K562 (cell line): ENCODE measurements at regions of chr2 and their contacts with region 1.

Region 1: DNA sequence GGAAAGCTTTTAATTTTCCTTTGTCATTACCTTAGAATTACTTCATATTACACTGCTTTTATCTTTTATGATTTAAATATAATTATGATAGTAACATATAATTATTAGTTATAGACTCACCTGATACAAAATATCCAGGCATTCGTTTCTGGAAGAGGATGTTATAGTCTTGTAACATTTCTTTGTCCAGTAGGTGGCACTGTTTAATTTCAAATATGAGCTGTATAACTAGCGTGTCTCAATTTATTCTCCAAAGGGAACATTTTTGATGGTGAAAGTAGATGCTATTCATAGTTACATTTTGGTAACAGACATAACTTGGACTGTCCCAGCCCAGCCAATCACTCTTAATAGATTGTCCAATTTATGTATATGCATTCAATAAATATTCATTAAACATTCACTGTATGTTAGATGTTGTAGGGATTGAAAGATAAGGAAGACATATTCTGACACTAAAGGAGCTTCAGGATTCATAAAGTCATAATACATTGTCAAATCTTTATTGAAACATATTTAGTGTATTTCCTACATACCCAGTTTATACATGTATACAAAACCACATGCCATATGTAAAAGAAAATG is 19.2 kb downstream of the DAW1 start:
- DNase-seq: peak; percentile 17 to 45 (median 19)
- ATAC-seq: peak; percentile 79
- H3K4me3 ChIP-seq: no peak overlapping the region
- H3K27ac ChIP-seq: no peak overlapping the region
- H3K4me1 ChIP-seq: no peaks in the 10 kb centered on the region
- H3K27me3 ChIP-seq: no peaks in the 10 kb centered on the region
- CTCF ChIP-seq: peak in 2 of 3 experiments; percentile 16 to 56; a peak in 3 of 6 replicates
- EP300 ChIP-seq: no peak
- POLR2A ChIP-seq: no peak
- RAD21 ChIP-seq: peak; percentile 37 to 56

Region 2: DNA sequence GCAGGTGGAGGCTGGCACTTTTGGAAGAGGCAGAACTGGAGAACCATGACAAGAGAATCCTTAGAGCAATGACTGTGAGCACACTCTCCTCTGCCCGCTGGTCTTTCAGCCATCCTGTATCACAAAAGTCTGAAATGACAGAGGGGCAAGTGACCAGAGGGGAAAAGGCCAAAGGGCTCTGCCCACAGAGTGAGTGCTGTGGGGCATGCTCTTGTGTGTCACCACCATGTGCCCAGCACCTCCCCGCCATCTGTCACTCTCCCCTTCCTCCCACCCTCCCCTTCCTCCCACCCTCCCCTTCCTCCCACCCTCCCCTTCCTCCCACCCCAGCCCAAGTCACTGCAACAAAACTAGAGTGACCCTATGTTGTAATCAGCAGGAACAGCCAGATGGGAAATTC is 12.8 kb after region 1 on chr2:
- CTCF ChIA-PET with region 1: no interaction called
- POLR2A ChIA-PET with region 1: no interaction called
- in situ Hi-C with region 1: no loop called
- intact Hi-C with region 1: no loop called
- DNase-seq: no peak
- ATAC-seq: no peak
- H3K4me3 ChIP-seq: no peak overlapping the region
- H3K27ac ChIP-seq: no peak overlapping the region
- H3K4me1 ChIP-seq: no peaks in the 10 kb centered on the region
- H3K27me3 ChIP-seq: no peaks in the 10 kb centered on the region
- CTCF ChIP-seq: no peak
- EP300 ChIP-seq: no peak
- POLR2A ChIP-seq: no peak
- RAD21 ChIP-seq: no peak

Region 3: GRCh38 chr2:227971619-227972230 is 81.1 kb after region 1 on chr2:
- CTCF ChIA-PET with region 1: no interaction called
- POLR2A ChIA-PET with region 1: no interaction called
- in situ Hi-C with region 1: no loop called
- intact Hi-C with region 1: no loop called
- DNase-seq: no peak
- ATAC-seq: no peak
- H3K4me3 ChIP-seq: no peak overlapping the region
- H3K27ac ChIP-seq: no peak overlapping the region
- H3K4me1 ChIP-seq: no peaks in the 10 kb centered on the region
- H3K27me3 ChIP-seq: no peaks in the 10 kb centered on the region
- CTCF ChIP-seq: no peak
- EP300 ChIP-seq: no peak
- POLR2A ChIP-seq: no peak
- RAD21 ChIP-seq: no peak

Region 4: DNA sequence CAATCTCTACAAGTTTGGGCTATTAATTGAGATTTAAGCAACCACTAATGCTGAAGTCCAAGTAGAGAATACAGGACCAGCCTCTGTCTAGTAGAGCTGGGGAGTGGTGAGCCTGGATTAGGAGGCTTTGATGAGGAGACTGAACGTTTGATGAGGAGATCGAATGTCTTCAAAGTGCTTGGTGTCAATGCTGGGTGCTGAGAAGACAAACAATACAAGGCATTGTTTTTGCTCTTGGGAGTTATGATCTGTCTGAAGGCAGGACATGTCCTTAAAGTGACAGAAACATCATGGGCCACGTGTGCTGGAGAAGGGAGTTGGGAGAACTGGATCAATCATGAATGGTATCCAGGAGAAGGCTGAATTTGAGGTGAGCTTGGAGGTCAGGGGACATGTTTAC is 147.3 kb after region 1 on chr2:
- CTCF ChIA-PET with region 1: no interaction called
- POLR2A ChIA-PET with region 1: no interaction called
- in situ Hi-C with region 1: no loop called
- intact Hi-C with region 1: no loop called
- DNase-seq: no peak
- ATAC-seq: no peak
- H3K4me3 ChIP-seq: no peak overlapping the region
- H3K27ac ChIP-seq: no peak overlapping the region
- H3K4me1 ChIP-seq: no peaks in the 10 kb centered on the region
- H3K27me3 ChIP-seq: no peaks in the 10 kb centered on the region
- CTCF ChIP-seq: no peak
- EP300 ChIP-seq: no peak
- POLR2A ChIP-seq: no peak
- RAD21 ChIP-seq: no peak

Region 5: GRCh38 chr2:229273723-229274338 is 1383.2 kb after region 1 on chr2:
- CTCF ChIA-PET with region 1: no interaction called
- POLR2A ChIA-PET with region 1: no interaction called
- in situ Hi-C with region 1: no loop called
- intact Hi-C with region 1: loop called (anchors 5 kb)
- DNase-seq: peak; percentile 16 to 27 (median 19)
- ATAC-seq: peak; percentile 87
- H3K4me3 ChIP-seq: no peak overlapping the region
- H3K27ac ChIP-seq: no peak overlapping the region
- H3K4me1 ChIP-seq: no peaks in the 10 kb centered on the region
- H3K27me3 ChIP-seq: no peaks in the 10 kb centered on the region
- CTCF ChIP-seq: peak; percentile 23 to 57 (median 48); a peak in 5 of 6 replicates
- EP300 ChIP-seq: no peak
- POLR2A ChIP-seq: no peak
- RAD21 ChIP-seq: peak; percentile 11 to 45; a peak in 2 of 4 replicates

Region 6: DNA sequence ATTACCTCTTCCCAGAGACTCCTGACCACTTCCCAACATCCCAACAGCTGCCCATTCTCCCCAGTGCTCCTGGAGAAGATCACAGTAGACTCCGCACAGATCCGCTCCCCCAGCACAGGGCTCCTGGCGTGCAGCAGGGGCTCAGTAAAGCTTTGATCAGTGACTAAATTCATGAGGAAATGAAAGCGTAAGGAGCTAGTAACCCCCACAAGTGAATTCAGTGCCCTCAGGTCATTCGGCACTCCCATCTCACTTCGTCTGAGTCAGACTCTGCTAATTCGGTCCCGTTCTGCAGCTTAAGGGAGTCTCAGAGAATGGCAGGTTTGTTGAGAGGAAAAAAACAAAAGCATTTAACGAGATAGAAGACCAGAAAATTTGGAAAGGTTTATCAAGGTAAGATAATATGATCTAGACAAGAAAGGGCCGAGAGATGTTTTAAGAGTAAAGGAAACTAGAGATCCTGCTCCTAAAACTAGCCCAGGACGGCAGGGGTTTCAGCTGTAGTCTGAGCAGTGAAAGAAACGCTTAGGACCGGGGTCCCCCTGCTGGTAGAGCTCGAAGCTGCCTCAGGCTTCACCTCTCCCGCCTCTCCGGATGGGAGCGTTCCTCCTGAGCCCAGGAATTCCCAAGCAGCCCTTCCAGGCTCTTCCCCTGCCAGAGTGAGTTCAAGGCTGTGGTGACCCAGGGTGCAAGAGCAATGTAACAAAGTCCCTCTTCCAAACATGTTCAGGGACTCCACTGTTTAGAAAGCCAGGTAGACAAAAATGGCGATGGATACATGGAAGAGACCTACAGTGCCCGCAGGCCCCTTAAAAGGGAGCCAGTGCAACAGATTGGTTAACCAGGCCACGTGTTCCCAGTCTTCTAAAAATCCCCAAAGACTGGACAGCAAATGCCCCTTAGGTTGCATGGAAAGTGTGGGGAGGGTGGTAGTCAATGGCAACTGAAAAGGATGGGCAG is 1696.4 kb after region 1 on chr2:
- CTCF ChIA-PET with region 1: no interaction called
- POLR2A ChIA-PET with region 1: no interaction called
- in situ Hi-C with region 1: no loop called
- intact Hi-C with region 1: loop called (anchors 2 kb)
- DNase-seq: peak; percentile 42 to 49 (median 44)
- ATAC-seq: peak; percentile 97
- H3K4me3 ChIP-seq: no peak overlapping the region
- H3K27ac ChIP-seq: no peak overlapping the region
- H3K4me1 ChIP-seq: no peaks in the 10 kb centered on the region
- H3K27me3 ChIP-seq: no peaks in the 10 kb centered on the region
- CTCF ChIP-seq: peak; percentile 57 to 59 (median 59)
- EP300 ChIP-seq: no peak
- POLR2A ChIP-seq: no peak
- RAD21 ChIP-seq: peak; percentile 52 to 62

Region 7: GRCh38 chr2:229714736-229715541 is 1824.4 kb after region 1 on chr2:
- CTCF ChIA-PET with region 1: no interaction called
- POLR2A ChIA-PET with region 1: no interaction called
- in situ Hi-C with region 1: no loop called
- intact Hi-C with region 1: loop called (anchors 5 kb)
- DNase-seq: peak; percentile 34 to 53 (median 42)
- ATAC-seq: peak; percentile 96
- H3K4me3 ChIP-seq: no peak overlapping the region
- H3K27ac ChIP-seq: no peak overlapping the region
- H3K4me1 ChIP-seq: peaks cover 0 to 22% of the 10 kb centered on the region in 2 experiments; a peak in 2 of 5 replicates
- H3K27me3 ChIP-seq: peaks cover 0 to 15% of the 10 kb centered on the region in 2 experiments; a peak in 1 of 5 replicates
- CTCF ChIP-seq: no peak
- EP300 ChIP-seq: no peak
- POLR2A ChIP-seq: no peak
- RAD21 ChIP-seq: no peak